ENCODE measurements at regions of chr1 and their contacts with region 1.

Region 1: GRCh38 chr1:225480825-225481434 is 53.1 kb upstream of the LBR start:
- DNase-seq: no peak
- H3K4me3 Mint-ChIP-seq: no peak overlapping the region
- H3K27ac Mint-ChIP-seq: no peak overlapping the region
- H3K4me1 Mint-ChIP-seq: peaks cover 25% of the 10 kb centered on the region
- H3K27me3 Mint-ChIP-seq: peaks cover 14% of the 10 kb centered on the region

Region 2: GRCh38 chr1:225441314-225442122 is 39.4 kb before region 1 on chr1:
- intact Hi-C with region 1: no loop called
- DNase-seq: no peak
- H3K4me3 Mint-ChIP-seq: peak overlapping the region; percentile 55
- H3K27ac Mint-ChIP-seq: peak overlapping the region; percentile 76
- H3K4me1 Mint-ChIP-seq: peaks cover 51% of the 10 kb centered on the region
- H3K27me3 Mint-ChIP-seq: peaks cover 2% of the 10 kb centered on the region

Region 3: DNA sequence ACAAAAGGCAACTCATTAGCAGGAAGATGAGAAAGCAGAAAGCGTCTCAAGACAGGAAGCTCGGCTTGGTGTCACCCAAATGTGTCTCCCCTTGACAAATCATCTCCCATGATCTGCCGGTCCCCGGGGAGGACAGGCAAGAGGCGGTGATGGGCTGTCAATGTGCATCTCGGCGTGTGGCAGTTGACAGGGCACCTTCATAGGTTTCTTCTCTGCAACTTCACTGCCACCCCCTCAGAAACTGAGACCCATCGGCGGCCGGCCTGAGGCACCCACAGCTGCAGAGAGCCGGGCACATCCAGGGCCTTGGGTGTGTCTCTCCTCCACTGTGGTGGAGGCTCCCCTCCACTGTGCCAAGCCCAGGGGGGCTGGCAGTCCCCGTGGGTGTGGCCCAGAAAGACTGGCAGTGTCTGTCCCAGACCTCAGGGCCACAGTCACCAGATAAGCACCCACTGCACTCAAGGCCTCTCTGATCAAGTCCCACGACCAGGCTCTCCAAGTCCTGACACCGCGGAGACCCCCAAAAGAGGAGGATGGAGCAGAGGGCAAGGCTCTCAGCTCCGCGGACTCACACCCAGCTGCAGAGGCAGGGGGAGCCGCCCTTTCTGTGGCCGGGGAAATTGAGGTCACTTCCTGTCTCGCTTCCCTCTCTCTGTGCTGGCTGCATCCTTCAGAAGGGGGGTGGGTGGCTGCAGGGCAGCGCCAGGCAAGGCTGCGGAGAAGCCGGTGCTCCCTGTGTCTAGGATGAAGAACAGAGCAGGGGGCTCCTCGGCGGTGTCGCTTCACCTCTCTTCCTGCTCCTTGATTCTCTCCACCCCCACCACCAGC is 13.5 kb before region 1 on chr1:
- intact Hi-C with region 1: no loop called
- DNase-seq: peak; percentile 80
- H3K4me3 Mint-ChIP-seq: peak overlapping the region; percentile 92
- H3K27ac Mint-ChIP-seq: peak overlapping the region; percentile 95
- H3K4me1 Mint-ChIP-seq: peaks cover 45% of the 10 kb centered on the region
- H3K27me3 Mint-ChIP-seq: no peaks in the 10 kb centered on the region

Region 4: DNA sequence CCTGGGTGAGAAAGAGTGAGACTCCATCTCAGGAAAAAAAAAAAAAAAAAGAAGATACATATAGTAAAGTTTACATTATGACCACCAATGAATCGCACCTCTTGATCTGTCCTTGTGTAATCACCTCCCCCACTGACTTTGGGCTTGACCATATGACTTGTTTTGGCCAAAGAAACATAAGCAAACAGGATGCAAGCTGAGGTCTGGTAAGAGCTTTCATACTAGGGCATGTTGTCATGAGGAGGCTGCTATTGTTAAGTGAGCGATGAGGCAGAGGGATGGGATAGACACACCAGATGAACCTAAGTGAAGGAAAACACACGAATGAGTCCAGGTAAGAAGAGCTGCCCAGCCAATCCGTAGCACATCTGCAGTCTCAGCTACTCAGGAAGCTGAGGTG is 161.2 kb after region 1 on chr1:
- intact Hi-C with region 1: no loop called
- DNase-seq: no peak
- H3K4me3 Mint-ChIP-seq: no peak overlapping the region
- H3K27ac Mint-ChIP-seq: no peak overlapping the region
- H3K4me1 Mint-ChIP-seq: no peaks in the 10 kb centered on the region
- H3K27me3 Mint-ChIP-seq: peaks cover 20% of the 10 kb centered on the region

Region 5: DNA sequence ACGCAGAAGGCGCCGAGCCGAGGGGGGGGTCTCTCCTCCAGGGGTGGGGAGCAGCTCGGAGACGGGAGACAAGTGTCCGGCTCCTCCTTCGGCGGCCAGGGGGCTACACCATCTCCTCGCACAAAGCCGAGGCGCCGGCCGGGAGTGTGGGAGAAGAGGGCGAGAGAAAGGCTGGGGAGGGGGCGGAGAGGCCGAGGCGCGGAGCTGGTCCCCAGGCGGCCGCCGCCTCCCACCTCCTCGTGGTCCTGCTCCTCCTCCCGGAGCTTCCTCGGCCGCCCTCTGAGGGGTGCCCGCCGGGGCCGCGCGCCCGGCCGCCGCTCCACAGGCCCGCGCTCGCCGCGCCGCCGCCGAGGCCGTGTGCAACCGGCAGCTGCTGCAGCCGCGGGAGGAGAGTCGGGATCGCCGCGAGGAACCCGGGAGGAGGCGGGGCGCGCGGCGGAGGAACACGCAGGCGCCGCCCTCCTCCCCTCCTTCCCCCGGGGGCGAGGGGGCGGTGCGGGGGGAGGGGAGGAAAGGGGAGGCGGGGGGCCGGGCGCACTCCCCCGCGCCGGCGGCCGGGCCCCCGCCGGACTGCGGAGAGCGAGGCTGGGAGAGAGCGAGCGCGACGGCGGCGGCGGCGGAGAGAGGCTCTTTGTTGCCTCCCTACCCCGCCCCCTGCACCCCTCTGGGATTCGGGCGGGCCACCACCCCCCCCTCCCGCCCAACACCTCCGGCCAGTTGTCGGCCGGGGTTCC is 172.0 kb after region 1 on chr1 and contains the start of gene ENAH:
- intact Hi-C with region 1: loop called (anchors 2 kb)
- DNase-seq: peak; percentile 12
- H3K4me3 Mint-ChIP-seq: peak within 1 kb of the TSS; percentile 87
- H3K27ac Mint-ChIP-seq: peak within 1 kb of the TSS; percentile 64
- H3K4me1 Mint-ChIP-seq: peaks cover 16% of the 10 kb centered on the region
- H3K27me3 Mint-ChIP-seq: peaks cover 67% of the 10 kb centered on the region
- total RNA-seq, gene ENAH: 0.05 and 0.23 TPM in 2 replicates

Region 6: GRCh38 chr1:226046240-226046639 is 565.3 kb after region 1 on chr1:
- intact Hi-C with region 1: no loop called
- DNase-seq: no peak
- H3K4me3 Mint-ChIP-seq: no peak overlapping the region
- H3K27ac Mint-ChIP-seq: no peak overlapping the region
- H3K4me1 Mint-ChIP-seq: no peaks in the 10 kb centered on the region
- H3K27me3 Mint-ChIP-seq: peaks cover 17% of the 10 kb centered on the region

Measured in activated T-helper 1 cell treated with anti-CD3 and anti-CD28 coated beads, Interleukin-12 subunit alpha, Interleukin-12 subunit beta, Interleukin-2, Interleukin-4 antibody, amounts not matched to agents 30 ng/mL and 10 ng/mL and 1 ng/mL, durations not matched to agents 14 hours and 24 hours and 36 hours (primary cell).